ENCODE measurements at regions of chr12 and their contacts with region 1.

Region 1: GRCh38 chr12:131836193-131836592 is 8.0 kb downstream of the MMP17 start:
- DNase-seq: peak; percentile 33
- ATAC-seq: no peak
- H3K4me3 ChIP-seq: no peak overlapping the region
- H3K27ac ChIP-seq: no peak overlapping the region
- H3K4me1 ChIP-seq: peaks cover 16% of the 10 kb centered on the region; the same call in 1 of the 2 replicates
- H3K27me3 ChIP-seq: no peaks in the 10 kb centered on the region
- CTCF ChIP-seq: peak; percentile 89

Region 2: DNA sequence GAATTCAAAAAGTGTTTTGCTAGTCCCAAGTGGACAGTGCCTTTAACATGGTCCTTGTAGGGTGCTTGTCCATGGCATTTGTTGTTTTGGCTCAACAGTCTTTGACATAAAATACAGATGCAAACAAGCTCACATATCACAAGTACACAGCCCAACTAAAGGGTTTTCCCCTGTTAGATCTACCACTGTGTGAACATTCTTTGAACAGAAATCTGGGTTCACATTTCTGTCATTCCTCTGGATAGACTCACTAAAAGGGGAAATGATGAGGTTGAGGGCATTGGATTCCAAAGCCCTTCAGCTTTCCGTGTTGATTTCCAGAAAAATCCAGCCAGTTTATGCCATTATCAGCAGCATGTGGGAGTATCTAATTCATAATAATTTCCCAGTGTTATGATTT is 167.7 kb after region 1 on chr12:
- CTCF ChIA-PET with region 1: no interaction called
- POLR2A ChIA-PET with region 1: no interaction called
- intact Hi-C with region 1: loop called (anchors 5 kb)
- DNase-seq: no peak
- ATAC-seq: no peak
- H3K4me3 ChIP-seq: no peak overlapping the region
- H3K27ac ChIP-seq: no peak overlapping the region
- H3K4me1 ChIP-seq: no peaks in the 10 kb centered on the region
- H3K27me3 ChIP-seq: no peaks in the 10 kb centered on the region
- CTCF ChIP-seq: no peak

Measured in PC-3 (cell line).